Calu3 (cell line): ENCODE measurements at regions of chr9 and their contacts with region 1.

Region 1: GRCh38 chr9:124174433-124174832 is 83.3 kb upstream of the NEK6 start:
- DNase-seq: no peak
- H3K4me3 Mint-ChIP-seq: no peak overlapping the region
- H3K27ac Mint-ChIP-seq: no peak overlapping the region
- H3K4me1 Mint-ChIP-seq: no peaks in the 10 kb centered on the region
- H3K27me3 Mint-ChIP-seq: peaks cover 8% of the 10 kb centered on the region
- CTCF ChIP-seq: no peak

Region 2: GRCh38 chr9:123642291-123643278 is 531.8 kb before region 1 on chr9:
- CTCF ChIA-PET with region 1: interaction called, 13 read pairs
- intact Hi-C with region 1: no loop called
- DNase-seq: no peak
- H3K4me3 Mint-ChIP-seq: no peak overlapping the region
- H3K27ac Mint-ChIP-seq: no peak overlapping the region
- H3K4me1 Mint-ChIP-seq: no peaks in the 10 kb centered on the region
- H3K27me3 Mint-ChIP-seq: no peaks in the 10 kb centered on the region
- CTCF ChIP-seq: no peak

Region 3: GRCh38 chr9:124197177-124198095 is 23.0 kb after region 1 on chr9:
- CTCF ChIA-PET with region 1: no interaction called
- intact Hi-C with region 1: no loop called
- DNase-seq: no peak
- H3K4me3 Mint-ChIP-seq: no peak overlapping the region
- H3K27ac Mint-ChIP-seq: no peak overlapping the region
- H3K4me1 Mint-ChIP-seq: no peaks in the 10 kb centered on the region
- H3K27me3 Mint-ChIP-seq: peaks cover 17% of the 10 kb centered on the region
- CTCF ChIP-seq: no peak